A549 (cell line): ENCODE measurements at regions of chr1 and their contacts with region 1.

Region 1: GRCh38 chr1:225474986-225475820 is 47.4 kb upstream of the LBR start:
- DNase-seq: peak; percentile 64 to 74
- ATAC-seq: peak; percentile 82 to 91
- H3K4me3 ChIP-seq: 0 out of 3 replicates have a peak overlapping the region, but pooled peaks have one; percentile 3
- H3K27ac ChIP-seq: peak overlapping the region; percentile 68 to 78
- H3K4me1 ChIP-seq: peaks cover 8% of the 10 kb centered on the region; the same call in 2 of the 3 replicates
- CTCF ChIP-seq: peak; percentile 100
- EP300 ChIP-seq: no peak
- POLR2A ChIP-seq: no peak
- RAD21 ChIP-seq: peak; percentile 100

Region 2: GRCh38 chr1:225454733-225455132 is 20.5 kb before region 1 on chr1:
- CTCF ChIA-PET with region 1: interaction called, 138 read pairs
- POLR2A ChIA-PET with region 1: no interaction called
- DNase-seq: peak; percentile 68 to 89
- ATAC-seq: peak; percentile 90 to 95
- H3K4me3 ChIP-seq: no peak overlapping the region; the same call in 2 of the 3 replicates
- H3K27ac ChIP-seq: peak overlapping the region; percentile 40 to 60; a peak in 5 of 6 replicates
- H3K4me1 ChIP-seq: peaks cover 37% of the 10 kb centered on the region
- CTCF ChIP-seq: no peak
- EP300 ChIP-seq: no peak
- POLR2A ChIP-seq: no peak
- RAD21 ChIP-seq: no peak

Region 3: DNA sequence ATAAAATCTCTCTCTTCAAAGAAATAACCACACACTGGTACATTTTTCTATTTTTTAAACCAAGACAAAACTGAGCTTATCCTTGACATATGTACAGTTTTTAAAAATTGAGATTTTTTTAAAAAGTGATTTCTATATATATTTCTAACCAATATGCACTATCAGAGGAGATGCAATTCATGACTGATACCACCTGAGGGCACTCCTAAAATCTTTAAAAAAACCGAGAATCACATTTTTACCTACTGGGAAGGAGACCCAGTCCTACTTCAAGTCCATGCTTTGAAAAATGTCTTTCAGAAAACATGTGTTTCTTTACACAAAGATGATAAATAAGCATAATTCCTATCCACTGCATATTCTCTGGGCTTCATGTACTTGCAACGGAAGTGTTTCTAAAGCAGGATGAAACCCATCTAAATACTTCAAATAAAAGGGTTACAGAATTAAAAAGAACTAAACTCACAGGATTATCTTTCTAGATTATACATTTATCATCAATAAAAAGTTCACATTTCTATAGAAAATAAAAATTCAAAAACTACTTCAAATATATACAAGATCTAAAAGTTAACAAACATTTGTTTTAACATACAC is 79.1 kb after region 1 on chr1:
- CTCF ChIA-PET with region 1: interaction called, 27 read pairs
- POLR2A ChIA-PET with region 1: no interaction called
- DNase-seq: peak; percentile 18 to 32
- ATAC-seq: peak in 1 of 2 experiments; percentile 79; a peak in 4 of 6 replicates
- H3K4me3 ChIP-seq: no peak overlapping the region
- H3K27ac ChIP-seq: no peak overlapping the region
- H3K4me1 ChIP-seq: no peaks in the 10 kb centered on the region
- CTCF ChIP-seq: peak; percentile 77
- EP300 ChIP-seq: no peak
- POLR2A ChIP-seq: no peak
- RAD21 ChIP-seq: peak; percentile 68 to 76

Region 4: GRCh38 chr1:225697428-225697827 is 222.2 kb after region 1 on chr1:
- CTCF ChIA-PET with region 1: no interaction called
- POLR2A ChIA-PET with region 1: no interaction called
- DNase-seq: no peak
- ATAC-seq: no peak
- H3K4me3 ChIP-seq: no peak overlapping the region
- H3K27ac ChIP-seq: peak overlapping the region; percentile 5 to 68; a peak in 4 of 6 replicates
- H3K4me1 ChIP-seq: peaks cover 51% of the 10 kb centered on the region
- CTCF ChIP-seq: no peak
- EP300 ChIP-seq: no peak
- POLR2A ChIP-seq: no peak
- RAD21 ChIP-seq: no peak

Region 5: DNA sequence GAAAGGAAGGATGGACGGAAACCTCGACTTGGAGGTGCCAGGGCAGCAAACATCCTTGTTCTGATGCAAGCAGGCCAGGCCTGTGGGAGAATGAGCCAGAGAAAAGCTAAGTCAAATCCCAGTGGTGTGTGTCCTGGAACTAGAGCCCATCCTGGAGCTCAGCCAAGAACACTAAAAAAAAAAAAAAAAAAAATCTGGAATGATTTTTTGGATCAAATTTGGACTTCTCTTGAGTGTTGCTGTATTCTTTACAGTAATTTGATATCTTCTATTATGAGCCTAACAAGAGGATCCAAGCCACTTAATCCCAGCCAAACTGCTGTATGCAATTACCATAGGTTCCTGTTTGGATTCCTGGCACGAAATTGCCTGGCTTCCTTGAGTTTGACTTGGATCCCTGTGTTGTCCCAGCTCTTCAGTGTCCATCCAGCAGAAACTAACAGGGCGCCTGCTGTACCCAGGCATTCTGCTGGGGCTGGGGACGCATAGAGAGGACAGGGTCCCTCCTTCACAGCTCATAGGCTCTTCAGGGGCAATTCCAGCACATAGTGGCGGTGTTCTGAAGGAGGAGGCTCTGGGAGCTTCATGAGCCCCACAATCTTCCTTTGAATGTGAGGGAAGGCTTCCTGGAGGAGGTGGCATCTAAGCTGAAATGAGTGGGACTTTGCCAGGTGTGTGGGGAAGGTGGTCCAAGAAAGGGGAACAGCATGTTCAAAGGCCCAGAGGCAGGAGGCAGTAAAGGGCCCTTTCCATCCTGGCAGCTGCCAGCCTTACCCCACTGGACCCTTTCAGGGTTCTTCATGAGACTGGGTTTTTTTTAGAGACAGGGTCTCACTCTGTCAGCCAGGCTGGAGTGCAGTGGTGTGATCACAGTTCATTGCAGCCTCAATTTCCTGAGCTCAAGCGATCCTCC is 359.5 kb after region 1 on chr1:
- CTCF ChIA-PET with region 1: interaction called, 44 read pairs
- POLR2A ChIA-PET with region 1: no interaction called
- DNase-seq: no peak
- ATAC-seq: peak in 1 of 2 experiments; percentile 48; a peak in 3 of 6 replicates
- H3K4me3 ChIP-seq: no peak overlapping the region
- H3K27ac ChIP-seq: no peak overlapping the region
- H3K4me1 ChIP-seq: no peaks in the 10 kb centered on the region
- CTCF ChIP-seq: no peak
- EP300 ChIP-seq: no peak
- POLR2A ChIP-seq: no peak
- RAD21 ChIP-seq: no peak

Region 6: DNA sequence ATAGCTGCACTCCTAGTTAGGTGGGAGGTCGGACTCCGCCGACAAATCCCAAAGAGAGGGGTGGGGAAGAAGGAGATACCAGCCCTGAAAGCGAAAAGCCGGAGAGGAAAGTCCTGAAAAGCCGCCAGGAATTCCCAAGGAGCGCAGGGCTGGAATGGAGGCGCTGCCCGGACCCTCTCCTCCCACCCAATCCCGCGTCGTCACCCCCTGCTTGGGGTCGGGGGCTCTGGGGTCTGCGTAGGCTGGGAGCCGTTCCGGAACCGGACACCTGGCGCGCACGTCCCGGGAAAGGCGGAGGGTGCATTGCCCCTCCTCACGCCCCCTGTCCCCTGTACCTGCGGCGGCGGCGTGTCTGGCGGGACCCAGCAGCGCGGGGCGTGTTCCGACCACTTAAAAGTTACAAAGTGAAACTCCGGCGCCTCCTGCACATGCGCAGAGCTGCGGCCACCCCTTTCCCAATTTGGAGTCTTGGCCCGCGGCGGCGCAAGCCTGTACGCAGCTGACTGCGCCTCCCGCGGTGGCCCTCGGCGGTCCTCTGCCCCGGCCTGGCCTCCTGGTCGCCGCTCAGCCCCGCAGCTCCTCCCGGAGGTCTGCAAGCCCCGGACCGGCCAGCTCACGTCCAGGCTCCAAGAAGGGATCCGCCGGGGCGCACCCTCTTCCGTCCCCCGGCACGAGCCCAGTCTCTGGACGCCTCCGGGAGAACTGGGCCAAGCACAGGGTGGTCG is 406.9 kb after region 1 on chr1 and contains the start of gene TMEM63A:
- CTCF ChIA-PET with region 1: interaction called, 25 read pairs
- POLR2A ChIA-PET with region 1: interaction called, 4 read pairs
- DNase-seq: peak; percentile 83 to 92
- ATAC-seq: peak; percentile 82 to 90
- H3K4me3 ChIP-seq: peak within 1 kb of the TSS; percentile 86
- H3K27ac ChIP-seq: peak within 1 kb of the TSS; percentile 88 to 95
- H3K4me1 ChIP-seq: peaks cover 35% of the 10 kb centered on the region
- CTCF ChIP-seq: 0 out of 3 replicates have a peak, but pooled peaks have one; percentile 18
- EP300 ChIP-seq: no peak
- POLR2A ChIP-seq: peak; percentile 79
- RAD21 ChIP-seq: peak in 1 of 2 experiments; percentile 23; a peak in 1 of 5 replicates
- polyA plus RNA-seq, gene TMEM63A: 9.5 and 12.4 TPM in 2 replicates

Region 7: GRCh38 chr1:225937048-225937968 is 462.1 kb after region 1 on chr1:
- CTCF ChIA-PET with region 1: interaction called, 10 read pairs
- POLR2A ChIA-PET with region 1: no interaction called
- DNase-seq: no peak
- ATAC-seq: no peak
- H3K4me3 ChIP-seq: no peak overlapping the region
- H3K27ac ChIP-seq: no peak overlapping the region
- H3K4me1 ChIP-seq: 0 out of 3 replicates have a peak, but pooled peaks cover 3% of the 10 kb centered on the region
- CTCF ChIP-seq: no peak
- EP300 ChIP-seq: no peak
- POLR2A ChIP-seq: no peak
- RAD21 ChIP-seq: no peak